ENCODE measurements at regions of chrX and their contacts with region 1.

Region 1: DNA sequence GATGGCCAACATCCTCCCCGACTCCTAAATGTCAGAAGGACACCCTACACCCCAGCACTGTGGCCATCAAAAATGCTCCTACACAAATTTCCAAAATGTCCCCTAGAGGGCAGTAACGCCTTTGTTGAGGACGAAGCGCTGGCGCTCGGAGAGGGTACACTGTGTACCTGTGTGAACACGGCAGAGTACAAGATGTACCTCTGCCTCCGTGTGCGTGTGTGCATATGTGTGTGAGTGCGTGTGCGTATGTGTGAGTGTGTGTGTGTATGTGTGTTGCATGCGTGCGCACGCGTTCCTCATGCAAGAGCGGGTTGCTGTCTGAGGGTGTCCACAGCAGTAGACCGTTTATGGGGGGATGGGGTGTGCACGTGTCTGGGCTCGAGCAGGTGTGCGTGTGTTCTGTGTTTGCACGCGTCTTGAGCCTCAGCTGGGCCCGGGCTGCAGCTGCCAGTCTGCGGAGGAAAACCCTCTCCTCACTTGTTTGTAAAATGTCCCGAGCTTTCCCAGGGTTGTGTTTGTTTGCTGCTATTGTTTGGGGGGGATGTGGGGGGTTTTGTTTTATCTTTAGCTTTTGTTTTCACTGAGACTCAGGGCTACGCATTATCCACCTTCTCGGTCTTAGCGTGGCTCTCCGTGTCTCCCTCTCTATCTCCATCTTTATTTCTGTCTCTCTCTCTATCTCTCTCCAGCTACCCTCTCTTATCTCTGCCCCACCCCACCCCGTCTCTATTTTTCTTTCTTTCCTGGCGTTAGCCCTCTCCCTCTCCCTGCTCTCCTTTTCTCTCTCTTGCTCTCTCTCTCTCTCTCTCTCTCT is 10.4 kb upstream of the TSPYL2 start:
- DNase-seq: peak; percentile 83 to 88
- H3K4me3 ChIP-seq: peak overlapping the region; percentile 40 to 45
- H3K27ac ChIP-seq: peak overlapping the region; percentile 77 to 85
- H3K4me1 ChIP-seq: peaks cover 0 to 10% (median 0%) of the 10 kb centered on the region in 4 donors
- H3K27me3 ChIP-seq: no peaks in the 10 kb centered on the region
- CTCF ChIP-seq: peak; percentile 60 to 66

Region 2: GRCh38 chrX:53093748-53094583 is 22.2 kb after region 1 on chrX and contains the start of gene KANTR:
- intact Hi-C with region 1: loop called (anchors 1 kb)
- DNase-seq: peak; percentile 87 to 94
- H3K4me3 ChIP-seq: peak within 1 kb of the TSS; percentile 67 to 79
- H3K27ac ChIP-seq: peak within 1 kb of the TSS; percentile 85 to 94
- H3K4me1 ChIP-seq: peaks cover 0 to 8% (median 0%) of the 10 kb centered on the region in 4 donors
- H3K27me3 ChIP-seq: no peaks in the 10 kb centered on the region
- CTCF ChIP-seq: no peak

Measured in tibial artery (tissue), 4 donors.